Esophagus muscularis mucosa (tissue), 4 donors: ENCODE measurements at regions of chr22 and their contacts with region 1.

Region 1: DNA sequence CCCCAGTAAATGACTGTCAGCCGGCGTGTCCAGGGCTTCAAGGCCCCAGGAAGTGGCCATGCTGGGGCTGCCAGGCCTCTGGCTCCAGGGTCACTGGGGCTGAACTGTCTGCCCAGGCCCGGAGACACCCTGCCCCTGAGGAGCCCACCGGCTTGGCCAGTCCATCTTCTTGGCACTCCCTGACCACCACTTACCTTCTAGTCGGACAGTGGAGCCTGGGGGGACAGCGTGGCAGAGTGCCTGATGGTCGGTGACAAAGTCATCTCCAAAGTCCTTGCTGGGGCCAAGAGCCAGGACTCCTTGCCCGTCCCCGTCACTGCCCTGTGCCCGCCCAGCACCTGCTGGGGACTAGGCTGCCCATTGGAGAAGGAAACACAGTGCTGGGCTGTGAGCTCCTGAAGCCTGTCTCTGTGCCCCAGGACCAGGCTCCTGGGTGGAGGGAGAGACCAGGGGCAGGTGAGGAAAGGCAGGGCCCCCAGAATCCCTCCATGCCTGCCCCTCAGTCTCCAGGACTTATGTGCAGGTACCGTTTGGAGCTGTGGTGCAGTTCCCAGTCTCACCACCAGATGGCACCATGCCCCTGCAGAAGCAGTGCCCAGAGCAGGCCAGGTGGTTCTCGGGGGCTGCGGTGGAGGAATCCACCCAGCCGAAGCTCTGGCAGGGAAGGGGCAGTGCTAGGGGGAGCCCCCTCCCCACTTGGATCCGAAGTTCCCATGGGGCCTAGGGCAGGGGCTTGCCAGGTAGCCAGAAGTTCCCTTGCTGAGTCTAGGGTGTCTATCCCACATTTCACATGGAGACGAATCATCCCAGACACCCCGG is 6.0 kb upstream of the CCDC188 start:
- DNase-seq: peak; percentile 97
- H3K4me3 ChIP-seq: no peak overlapping the region
- H3K27ac ChIP-seq: no peak overlapping the region
- H3K4me1 ChIP-seq: peaks cover 3 to 12% (median 8%) of the 10 kb centered on the region in 4 donors
- H3K27me3 ChIP-seq: peaks cover 0 to 53% (median 4%) of the 10 kb centered on the region in 4 donors
- CTCF ChIP-seq: peak; percentile 98 to 100 (median 100)
- EP300 ChIP-seq: no peak
- POLR2A ChIP-seq: no peak

Region 2: GRCh38 chr22:20079745-20080444 is 76.9 kb before region 1 on chr22 and contains the start of gene DGCR8:
- intact Hi-C with region 1: no loop called
- DNase-seq: peak; percentile 94
- H3K4me3 ChIP-seq: peak within 1 kb of the TSS; percentile 78 to 89 (median 82)
- H3K27ac ChIP-seq: peak within 1 kb of the TSS; percentile 87 to 96 (median 92)
- H3K4me1 ChIP-seq: peaks cover 45 to 51% (median 50%) of the 10 kb centered on the region in 4 donors
- H3K27me3 ChIP-seq: no peaks in the 10 kb centered on the region
- CTCF ChIP-seq: peak in 1 of 3 experiments; percentile 21
- EP300 ChIP-seq: no peak
- POLR2A ChIP-seq: no peak
- total RNA-seq, gene DGCR8: 16.9 to 26.6 (median 19.6) TPM

Region 3: DNA sequence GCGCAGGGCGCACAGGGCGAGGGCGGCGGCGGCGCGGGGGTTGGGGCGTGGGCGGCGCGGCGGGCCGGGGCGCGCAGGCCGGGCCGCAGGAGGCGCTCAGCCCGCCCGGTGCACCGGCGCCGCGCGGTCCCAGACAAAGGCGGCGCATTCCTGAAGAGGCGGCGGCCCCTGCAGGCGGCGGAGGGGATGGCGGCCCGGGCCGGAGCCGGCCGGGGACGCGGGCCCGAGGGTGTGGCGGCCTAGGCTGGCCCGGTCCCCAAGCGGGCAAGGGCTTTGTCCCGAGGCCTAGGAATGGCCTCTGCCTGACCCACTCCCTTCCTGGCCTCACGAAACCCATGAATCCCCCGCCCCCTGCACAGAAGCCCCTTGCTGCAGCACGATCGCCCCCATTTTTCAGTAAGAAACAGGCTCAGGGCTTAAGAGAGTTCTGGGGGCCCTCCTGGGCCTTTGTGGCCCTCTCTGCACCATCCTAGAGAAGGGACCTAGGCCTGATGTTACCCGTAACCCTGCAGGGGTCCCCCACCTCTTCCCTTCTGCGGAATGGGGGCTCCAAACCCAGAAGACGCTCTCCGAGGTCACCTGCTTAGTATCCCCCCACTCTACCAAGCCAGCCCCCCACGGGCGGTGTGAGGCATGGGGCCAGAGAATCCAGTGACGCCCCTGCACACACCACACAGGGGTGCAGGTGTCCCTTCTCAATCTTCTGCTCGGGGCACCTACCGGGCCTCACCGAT is 111.6 kb after region 1 on chr22 and contains the start of gene RTN4R:
- intact Hi-C with region 1: loop called (anchors 5 kb)
- DNase-seq: no peak
- H3K4me3 ChIP-seq: peak within 1 kb of the TSS; percentile 54 to 67 (median 56)
- H3K27ac ChIP-seq: no peak within 1 kb of the TSS
- H3K4me1 ChIP-seq: peaks cover 11 to 17% (median 15%) of the 10 kb centered on the region in 4 donors
- H3K27me3 ChIP-seq: peaks cover 0 to 14% (median 0%) of the 10 kb centered on the region in 4 donors
- CTCF ChIP-seq: peak; percentile 68 to 83 (median 79)
- EP300 ChIP-seq: no peak
- POLR2A ChIP-seq: no peak
- total RNA-seq, gene RTN4R: 1.8 to 2.2 TPM in 2 of 4 donors, not detected in the others

Region 4: DNA sequence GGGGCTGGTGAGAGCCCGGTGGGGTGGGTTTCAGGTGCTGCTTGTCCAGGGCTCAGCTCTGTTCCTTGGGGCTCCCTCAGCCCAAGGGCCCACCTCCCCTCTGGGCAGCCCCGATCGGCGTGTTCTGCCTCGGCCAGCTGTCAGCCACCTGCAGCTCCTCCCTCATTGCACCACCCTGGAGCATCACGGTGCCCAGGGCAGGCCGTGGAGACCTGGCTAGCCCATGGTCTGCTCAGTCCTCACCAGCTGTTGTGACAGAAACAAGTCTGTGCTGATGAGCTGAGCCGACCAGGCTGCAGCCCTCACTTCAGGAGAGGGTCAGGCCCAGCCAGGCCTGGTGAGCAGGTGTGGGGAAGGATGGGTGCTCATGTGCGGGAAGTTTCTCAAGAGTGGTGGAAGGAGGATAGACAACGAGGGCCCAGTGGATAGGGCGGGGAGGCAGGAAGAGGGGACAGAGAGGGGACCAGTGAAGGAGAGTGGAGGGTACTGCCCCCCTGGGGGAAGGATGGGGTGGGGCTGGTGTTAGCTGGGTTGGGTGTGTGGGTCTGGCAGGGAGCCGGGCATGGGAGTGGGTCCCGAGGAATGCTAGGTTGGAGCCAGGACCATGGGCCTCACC is 127.8 kb after region 1 on chr22:
- intact Hi-C with region 1: loop called (anchors 1 kb)
- DNase-seq: no peak
- H3K4me3 ChIP-seq: no peak overlapping the region
- H3K27ac ChIP-seq: no peak overlapping the region
- H3K4me1 ChIP-seq: no peaks in the 10 kb centered on the region
- H3K27me3 ChIP-seq: peaks cover 0 to 7% (median 0%) of the 10 kb centered on the region in 4 donors
- CTCF ChIP-seq: no peak
- EP300 ChIP-seq: no peak
- POLR2A ChIP-seq: no peak